K562 (cell line): ENCODE measurements at regions of chr1 and their contacts with region 1.

Region 1: GRCh38 chr1:151198255-151199127 is at the start of gene PIP5K1A:
- DNase-seq: peak; percentile 94 to 97 (median 96)
- ATAC-seq: peak; percentile 88
- H3K4me3 ChIP-seq: peak within 1 kb of the TSS; percentile 56
- H3K27ac ChIP-seq: peak within 1 kb of the TSS; percentile 81
- H3K4me1 ChIP-seq: peaks cover 11 to 15% of the 10 kb centered on the region in 2 experiments; a peak in 4 of 5 replicates
- H3K27me3 ChIP-seq: no peaks in the 10 kb centered on the region
- CTCF ChIP-seq: no peak
- EP300 ChIP-seq: no peak
- POLR2A ChIP-seq: peak; percentile 82
- RAD21 ChIP-seq: no peak
- polyA plus RNA-seq, gene PIP5K1A: 1.9 to 4.2 TPM

Region 2: DNA sequence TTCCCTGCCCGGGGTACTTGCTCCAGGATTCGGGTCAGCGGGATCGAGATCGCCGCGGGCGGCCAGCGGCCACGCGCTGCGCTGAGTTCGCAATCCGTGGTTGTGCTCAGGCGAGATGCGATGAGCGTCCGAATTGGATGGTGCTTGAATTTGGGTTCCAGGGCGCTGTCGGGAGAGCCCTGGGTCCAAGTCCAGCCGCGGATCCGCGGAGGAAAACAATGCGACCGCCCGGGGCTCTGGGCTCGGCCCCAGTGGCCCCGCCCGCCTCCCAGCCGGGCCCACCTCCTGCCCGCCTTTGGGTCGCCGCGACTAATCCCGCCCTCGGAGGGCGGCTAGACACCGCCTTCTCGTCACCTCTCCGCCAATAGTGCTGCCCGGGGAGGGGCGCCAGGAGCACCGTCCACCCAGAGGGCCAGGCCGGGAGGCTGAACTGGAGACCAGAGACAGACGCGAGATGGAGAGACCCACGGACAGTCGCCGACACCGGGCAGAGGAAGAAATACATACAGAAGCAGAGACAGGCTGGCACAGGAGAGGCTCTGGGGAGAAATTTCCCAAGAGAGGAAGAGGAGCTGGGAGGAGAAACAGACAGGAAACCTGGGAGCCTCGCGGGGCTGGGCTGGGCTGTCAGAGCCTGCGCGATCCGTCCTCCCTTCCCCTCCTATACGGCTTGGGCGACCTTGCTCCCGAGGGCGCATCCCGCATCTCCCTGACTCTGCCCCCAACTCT is 51.9 kb before region 1 on chr1 and contains the start of gene SEMA6C:
- CTCF ChIA-PET with region 1: no interaction called
- POLR2A ChIA-PET with region 1: no interaction called
- in situ Hi-C with region 1: no loop called
- intact Hi-C with region 1: no loop called
- DNase-seq: peak; percentile 93 to 95 (median 94)
- ATAC-seq: peak; percentile 99
- H3K4me3 ChIP-seq: peak within 1 kb of the TSS; percentile 59
- H3K27ac ChIP-seq: peak within 1 kb of the TSS; percentile 39; the same call in 1 of the 3 replicates
- H3K4me1 ChIP-seq: peaks cover 20 to 46% of the 10 kb centered on the region in 2 experiments; a peak in 4 of 5 replicates
- H3K27me3 ChIP-seq: no peaks in the 10 kb centered on the region
- CTCF ChIP-seq: no peak
- EP300 ChIP-seq: no peak
- POLR2A ChIP-seq: peak; percentile 71
- RAD21 ChIP-seq: no peak
- polyA plus RNA-seq, gene SEMA6C: 0.03 to 0.11 TPM

Region 3: DNA sequence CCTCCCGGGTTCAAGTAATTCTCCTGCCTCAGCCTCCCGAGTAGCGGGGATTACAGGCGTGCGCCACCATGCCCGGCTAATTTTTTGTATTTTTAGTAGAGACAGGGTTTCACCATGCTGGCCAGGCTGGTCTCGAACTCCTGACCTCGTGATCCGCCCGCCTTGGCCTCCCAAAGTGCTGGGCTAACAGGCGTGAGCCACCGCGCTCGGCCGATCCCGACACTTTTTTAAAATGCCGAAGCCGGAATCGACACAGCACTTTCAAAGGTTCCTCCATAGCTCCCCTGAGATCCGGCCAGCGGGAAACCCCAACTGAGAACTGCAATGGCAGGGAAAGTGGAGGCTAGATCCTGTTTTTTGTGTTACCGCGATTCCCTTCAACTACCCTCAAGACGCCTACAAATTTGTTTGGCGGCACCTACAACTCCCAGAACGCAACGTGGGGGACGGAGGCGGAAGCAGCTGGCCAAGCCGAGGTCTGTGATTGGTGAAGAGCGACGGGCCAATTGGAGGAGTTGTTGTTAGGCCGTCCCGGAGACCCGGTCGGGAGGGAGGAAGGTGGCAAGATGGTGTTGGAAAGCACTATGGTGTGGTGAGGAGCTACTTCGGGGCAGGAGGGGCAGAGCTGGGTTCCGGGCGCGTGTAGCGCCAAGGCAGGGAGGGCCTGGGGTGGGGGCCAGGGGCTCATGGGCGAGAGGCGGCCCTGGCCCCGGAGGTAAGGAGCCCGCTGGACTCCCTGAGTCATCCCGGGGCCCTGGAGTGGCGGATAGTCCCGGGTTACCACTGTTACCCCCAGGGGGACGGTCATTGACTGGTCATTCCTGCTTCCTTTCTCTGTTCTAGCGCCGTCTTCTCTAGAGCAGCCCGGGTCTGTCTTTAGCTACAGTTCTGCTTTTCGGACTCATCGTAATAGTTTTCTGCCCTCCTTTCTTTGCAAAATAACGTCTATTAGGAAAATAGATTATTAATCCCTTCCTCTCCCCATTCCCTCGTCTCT is 56.0 kb after region 1 on chr1 and contains the start of gene PSMD4:
- CTCF ChIA-PET with region 1: interaction called, 8 read pairs
- POLR2A ChIA-PET with region 1: interaction called, 3 read pairs
- in situ Hi-C with region 1: no loop called
- intact Hi-C with region 1: loop called (anchors 1 kb)
- DNase-seq: peak; percentile 98 to 100 (median 99)
- ATAC-seq: peak; percentile 97
- H3K4me3 ChIP-seq: peak within 1 kb of the TSS; percentile 58
- H3K27ac ChIP-seq: peak within 1 kb of the TSS; percentile 83
- H3K4me1 ChIP-seq: peaks cover 0 to 4% of the 10 kb centered on the region in 2 experiments; a peak in 2 of 5 replicates
- H3K27me3 ChIP-seq: no peaks in the 10 kb centered on the region
- CTCF ChIP-seq: no peak
- EP300 ChIP-seq: no peak; the same call in 1 of the 2 replicates
- POLR2A ChIP-seq: peak; percentile 98
- RAD21 ChIP-seq: no peak
- polyA plus RNA-seq, gene PSMD4: 194 to 243 TPM

Region 4: DNA sequence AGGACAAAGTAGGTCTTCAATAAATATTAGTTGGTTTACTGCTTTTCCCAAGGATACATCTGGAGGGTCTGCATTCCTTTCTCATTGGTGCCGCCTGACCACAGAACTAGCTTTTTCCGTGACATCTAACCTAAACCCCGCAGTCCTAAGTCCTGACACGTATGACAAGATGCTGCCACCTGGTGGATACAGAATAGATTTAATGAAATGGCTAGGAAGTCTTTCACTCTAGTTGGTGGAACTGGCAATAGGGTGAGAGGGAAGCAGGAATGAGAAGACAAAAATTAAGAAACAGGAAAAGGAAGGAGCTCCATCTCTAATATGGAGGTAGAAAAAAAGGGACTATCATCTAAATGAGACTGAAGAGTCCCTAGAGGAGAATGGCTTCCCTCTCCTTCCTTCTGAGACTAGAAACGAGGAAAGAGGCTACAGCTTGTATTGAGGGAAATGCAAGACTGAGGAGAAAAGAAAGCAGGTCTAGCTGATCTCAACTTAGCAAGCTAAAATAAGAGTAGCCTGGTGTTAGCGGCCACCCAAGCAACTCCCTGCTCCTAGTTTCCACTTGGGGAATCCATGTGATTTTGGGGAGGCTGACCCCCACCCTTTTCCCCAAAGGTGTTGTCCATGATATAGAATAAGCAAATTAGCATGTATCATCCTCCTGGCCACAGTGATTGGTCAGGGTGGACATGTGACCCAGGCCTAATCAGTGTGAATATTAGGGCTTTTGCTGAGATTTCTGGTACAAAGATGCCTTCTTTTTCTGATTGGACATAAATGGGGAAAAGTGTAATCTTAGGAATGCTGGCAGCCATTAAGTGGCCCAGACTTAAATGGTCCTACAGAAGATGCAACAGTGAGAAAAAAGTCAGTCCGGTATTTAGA is 142.6 kb after region 1 on chr1:
- CTCF ChIA-PET with region 1: no interaction called
- POLR2A ChIA-PET with region 1: no interaction called
- in situ Hi-C with region 1: no loop called
- intact Hi-C with region 1: loop called (anchors 1 kb)
- DNase-seq: peak; percentile 52 to 89 (median 62)
- ATAC-seq: peak; percentile 94
- H3K4me3 ChIP-seq: no peak overlapping the region
- H3K27ac ChIP-seq: peak overlapping the region; percentile 20; the same call in 1 of the 3 replicates
- H3K4me1 ChIP-seq: peaks cover 0 to 3% of the 10 kb centered on the region in 2 experiments; a peak in 3 of 5 replicates
- H3K27me3 ChIP-seq: no peaks in the 10 kb centered on the region
- CTCF ChIP-seq: peak; percentile 73 to 87 (median 75)
- EP300 ChIP-seq: no peak
- POLR2A ChIP-seq: no peak; the same call in 1 of the 2 replicates
- RAD21 ChIP-seq: peak; percentile 91 to 93

Region 5: GRCh38 chr1:151384584-151384983 is 186.1 kb after region 1 on chr1:
- CTCF ChIA-PET with region 1: no interaction called
- POLR2A ChIA-PET with region 1: no interaction called
- in situ Hi-C with region 1: no loop called
- intact Hi-C with region 1: loop called (anchors 10 kb)
- DNase-seq: peak in 3 of 4 experiments; percentile 30 to 73 (median 69)
- ATAC-seq: peak; percentile 77
- H3K4me3 ChIP-seq: no peak overlapping the region
- H3K27ac ChIP-seq: no peak overlapping the region
- H3K4me1 ChIP-seq: peaks cover 14 to 21% of the 10 kb centered on the region in 2 experiments; a peak in 4 of 5 replicates
- H3K27me3 ChIP-seq: no peaks in the 10 kb centered on the region
- CTCF ChIP-seq: no peak
- EP300 ChIP-seq: 0 out of 2 replicates have a peak, but pooled peaks have one; percentile 3
- POLR2A ChIP-seq: no peak
- RAD21 ChIP-seq: no peak